K562 (cell line): ENCODE measurements at regions of chr3 and their contacts with region 1.

Region 1: DNA sequence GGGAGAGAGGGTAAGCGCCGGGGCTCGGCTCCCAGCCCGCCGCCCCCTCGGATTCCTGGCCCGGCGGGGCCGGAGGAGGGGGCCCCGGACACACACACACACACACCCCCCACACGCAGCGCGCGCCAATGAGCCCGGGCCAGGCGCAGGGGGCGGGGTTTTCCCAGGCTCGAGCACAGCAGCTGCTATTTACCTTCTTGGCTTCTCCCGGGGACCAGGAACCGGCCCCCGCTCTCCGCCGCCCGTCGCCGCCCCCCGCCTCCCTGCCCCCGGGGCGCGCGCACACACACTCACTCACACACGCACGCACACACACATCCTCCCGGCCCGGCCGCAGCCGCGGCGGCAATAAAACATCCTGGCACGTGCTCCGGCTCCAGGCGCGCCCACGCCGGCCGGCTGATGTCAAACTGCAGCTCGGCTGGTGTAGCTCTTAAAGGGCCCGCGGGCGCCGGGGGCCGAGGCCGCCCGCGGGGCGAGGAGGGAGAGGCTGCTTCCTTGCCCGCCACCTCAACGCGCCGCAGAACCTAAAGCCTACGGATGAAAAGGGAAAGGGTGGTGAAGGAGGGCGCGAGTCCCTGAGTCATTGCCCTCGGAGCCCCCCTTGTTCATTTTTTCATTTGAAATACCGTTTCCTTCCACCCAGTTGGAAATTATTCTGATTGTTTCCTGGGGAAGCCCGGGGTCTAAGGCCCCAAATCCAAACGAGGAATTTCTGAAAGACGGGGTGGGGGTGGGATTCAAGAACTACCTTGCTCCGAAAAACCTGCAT is 1.0 kb upstream of the HES1 start:
- DNase-seq: peak; percentile 75 to 94 (median 80)
- ATAC-seq: peak; percentile 61
- H3K4me3 ChIP-seq: peak overlapping the region; percentile 56
- H3K27ac ChIP-seq: peak overlapping the region; percentile 85
- H3K4me1 ChIP-seq: peaks cover 26 to 49% of the 10 kb centered on the region in 2 experiments
- H3K27me3 ChIP-seq: no peaks in the 10 kb centered on the region
- CTCF ChIP-seq: no peak
- EP300 ChIP-seq: peak; percentile 67
- POLR2A ChIP-seq: peak; percentile 69
- RAD21 ChIP-seq: peak in 1 of 2 experiments; percentile 21; a peak in 2 of 4 replicates

Region 2: GRCh38 chr3:193499119-193499770 is 635.7 kb before region 1 on chr3:
- CTCF ChIA-PET with region 1: no interaction called
- POLR2A ChIA-PET with region 1: no interaction called
- in situ Hi-C with region 1: no loop called
- intact Hi-C with region 1: no loop called
- DNase-seq: no peak
- ATAC-seq: no peak
- H3K4me3 ChIP-seq: no peak overlapping the region
- H3K27ac ChIP-seq: no peak overlapping the region
- H3K4me1 ChIP-seq: no peaks in the 10 kb centered on the region
- H3K27me3 ChIP-seq: no peaks in the 10 kb centered on the region; a peak in 1 of 5 replicates
- CTCF ChIP-seq: no peak
- EP300 ChIP-seq: no peak
- POLR2A ChIP-seq: no peak
- RAD21 ChIP-seq: no peak

Region 3: GRCh38 chr3:193742628-193743027 is 392.3 kb before region 1 on chr3:
- CTCF ChIA-PET with region 1: no interaction called
- POLR2A ChIA-PET with region 1: no interaction called
- in situ Hi-C with region 1: no loop called
- intact Hi-C with region 1: no loop called
- DNase-seq: no peak
- ATAC-seq: no peak
- H3K4me3 ChIP-seq: no peak overlapping the region
- H3K27ac ChIP-seq: no peak overlapping the region
- H3K4me1 ChIP-seq: peaks cover 6 to 18% of the 10 kb centered on the region in 2 experiments; a peak in 4 of 5 replicates
- H3K27me3 ChIP-seq: no peaks in the 10 kb centered on the region
- CTCF ChIP-seq: no peak
- EP300 ChIP-seq: no peak
- POLR2A ChIP-seq: no peak
- RAD21 ChIP-seq: no peak

Region 4: GRCh38 chr3:193788189-193788991 is 346.6 kb before region 1 on chr3:
- CTCF ChIA-PET with region 1: interaction called, 13 read pairs
- POLR2A ChIA-PET with region 1: interaction called, 21 read pairs
- in situ Hi-C with region 1: loop called (anchors 5 kb)
- intact Hi-C with region 1: loop called (anchors 2 kb)
- DNase-seq: peak; percentile 83 to 89 (median 85)
- ATAC-seq: peak; percentile 99
- H3K4me3 ChIP-seq: no peak overlapping the region
- H3K27ac ChIP-seq: no peak overlapping the region
- H3K4me1 ChIP-seq: peaks cover 10 to 13% of the 10 kb centered on the region in 2 experiments; a peak in 3 of 5 replicates
- H3K27me3 ChIP-seq: no peaks in the 10 kb centered on the region
- CTCF ChIP-seq: peak; percentile 86 to 95 (median 93)
- EP300 ChIP-seq: peak; percentile 59
- POLR2A ChIP-seq: no peak
- RAD21 ChIP-seq: peak; percentile 95 to 96

Region 5: DNA sequence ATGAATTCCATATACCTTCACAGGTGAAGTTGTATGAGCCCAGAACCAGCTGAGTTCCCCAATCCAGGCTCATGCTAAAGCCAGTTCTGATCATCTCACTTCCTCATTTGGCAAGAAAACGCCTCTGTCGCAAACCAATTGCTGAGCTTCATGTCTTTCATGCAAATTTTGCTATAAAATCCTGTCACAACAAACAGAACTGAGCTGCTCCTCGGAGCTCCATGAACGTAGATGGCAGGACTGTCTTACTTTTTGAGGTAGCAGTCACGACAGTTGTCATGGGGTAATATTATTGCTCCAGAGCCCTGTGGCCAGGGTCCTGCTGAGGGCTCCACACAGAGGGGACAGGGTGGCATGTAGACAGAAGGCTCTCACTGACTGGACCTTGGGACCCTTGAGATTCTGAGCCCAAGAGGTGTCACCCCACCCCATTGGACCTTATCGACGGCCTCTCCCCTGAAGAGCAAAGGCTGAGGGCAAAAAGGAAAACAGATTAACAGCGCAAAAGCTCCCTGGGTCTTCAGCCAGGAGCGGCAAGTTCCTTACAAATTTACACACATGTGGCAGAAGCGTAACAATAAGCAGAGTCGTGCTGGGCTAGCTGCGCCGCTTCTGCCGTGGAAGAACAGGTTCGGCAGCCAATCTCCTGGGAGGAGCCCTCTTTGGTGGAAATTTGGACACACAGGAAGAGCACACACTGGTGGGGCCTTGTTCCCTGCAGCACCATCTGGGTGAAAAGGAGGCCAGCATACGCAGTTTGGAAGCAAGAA is 292.7 kb before region 1 on chr3:
- CTCF ChIA-PET with region 1: no interaction called
- POLR2A ChIA-PET with region 1: interaction called, 14 read pairs
- in situ Hi-C with region 1: no loop called
- intact Hi-C with region 1: loop called (anchors 2 kb)
- DNase-seq: peak in 3 of 4 experiments; percentile 37 to 71 (median 42)
- ATAC-seq: peak; percentile 49
- H3K4me3 ChIP-seq: peak overlapping the region; percentile 22
- H3K27ac ChIP-seq: peak overlapping the region; percentile 95
- H3K4me1 ChIP-seq: peaks cover 23 to 60% of the 10 kb centered on the region in 2 experiments
- H3K27me3 ChIP-seq: no peaks in the 10 kb centered on the region
- CTCF ChIP-seq: peak in 1 of 3 experiments; percentile 7; a peak in 1 of 6 replicates
- EP300 ChIP-seq: no peak
- POLR2A ChIP-seq: peak; percentile 39
- RAD21 ChIP-seq: no peak; a peak in 1 of 4 replicates

Region 6: DNA sequence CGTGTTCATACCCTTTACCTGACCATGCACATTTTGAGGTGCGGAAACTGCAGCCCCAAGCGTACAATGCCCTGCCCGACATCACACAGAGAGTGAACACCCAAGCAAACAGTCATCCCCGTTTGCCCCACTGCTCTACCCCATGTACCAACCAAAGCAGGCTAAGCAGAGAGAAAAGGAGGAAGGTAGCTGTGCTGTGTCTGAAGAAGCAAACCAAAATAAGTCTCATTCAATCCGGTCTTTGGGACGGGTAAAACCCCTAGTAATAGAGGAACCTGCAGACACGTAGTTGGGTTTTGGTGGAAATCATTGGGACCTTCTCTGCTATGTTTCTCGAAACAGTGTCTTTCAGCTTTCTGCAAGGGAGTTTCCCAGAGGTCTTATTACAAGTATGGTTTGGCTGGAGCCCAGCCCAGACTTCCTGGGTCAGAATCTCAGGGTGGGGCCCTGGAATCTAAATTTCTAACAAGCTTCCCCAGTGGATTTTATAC is 163.6 kb before region 1 on chr3:
- CTCF ChIA-PET with region 1: interaction called, 3 read pairs
- POLR2A ChIA-PET with region 1: interaction called, 12 read pairs
- in situ Hi-C with region 1: no loop called
- intact Hi-C with region 1: loop called (anchors 10 kb)
- DNase-seq: no peak
- ATAC-seq: no peak
- H3K4me3 ChIP-seq: no peak overlapping the region
- H3K27ac ChIP-seq: no peak overlapping the region
- H3K4me1 ChIP-seq: peaks cover 6 to 19% of the 10 kb centered on the region in 2 experiments; a peak in 4 of 5 replicates
- H3K27me3 ChIP-seq: no peaks in the 10 kb centered on the region
- CTCF ChIP-seq: no peak
- EP300 ChIP-seq: no peak
- POLR2A ChIP-seq: no peak
- RAD21 ChIP-seq: no peak

Region 7: DNA sequence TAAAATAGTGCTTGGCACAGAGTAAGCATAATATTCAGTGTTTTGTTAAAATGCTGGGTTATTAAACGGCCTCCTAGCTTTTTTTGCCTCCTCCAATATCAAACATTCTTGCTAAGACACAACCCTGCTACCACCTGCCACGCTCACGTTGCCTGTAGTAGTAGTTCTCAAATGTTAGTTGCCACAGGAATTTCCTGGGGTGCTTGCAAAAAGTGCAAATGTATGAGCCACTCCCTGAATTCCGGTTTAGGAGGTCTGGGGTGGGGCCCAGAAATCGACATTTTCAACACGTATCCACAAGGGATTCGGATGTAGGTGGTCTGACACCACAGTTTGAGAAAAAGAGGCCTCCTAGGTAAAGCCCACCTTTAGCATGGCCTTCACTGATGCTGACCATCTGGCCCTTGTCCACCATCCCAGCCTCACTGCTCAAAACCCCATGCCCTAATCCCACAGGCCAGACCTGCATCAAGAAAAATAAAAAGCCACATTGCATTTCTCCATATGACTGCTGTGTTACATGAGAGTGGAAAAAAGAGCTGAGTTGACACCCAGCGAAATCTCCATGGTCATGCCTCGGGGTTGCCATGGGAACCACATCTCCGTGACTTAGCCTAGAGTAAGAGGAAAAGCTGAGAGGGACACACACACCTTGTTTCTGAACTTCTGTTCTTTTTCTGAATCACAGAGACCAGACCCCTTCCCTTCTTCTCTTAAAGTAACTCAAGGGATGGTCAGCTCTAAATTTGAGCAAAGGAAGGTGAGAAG is 115.4 kb before region 1 on chr3:
- CTCF ChIA-PET with region 1: no interaction called
- POLR2A ChIA-PET with region 1: no interaction called
- in situ Hi-C with region 1: no loop called
- intact Hi-C with region 1: no loop called
- DNase-seq: peak in 1 of 4 experiments; percentile 31
- ATAC-seq: peak; percentile 63; the same call in 1 of the 3 replicates
- H3K4me3 ChIP-seq: no peak overlapping the region
- H3K27ac ChIP-seq: no peak overlapping the region
- H3K4me1 ChIP-seq: no peaks in the 10 kb centered on the region
- H3K27me3 ChIP-seq: no peaks in the 10 kb centered on the region
- CTCF ChIP-seq: no peak
- EP300 ChIP-seq: no peak
- POLR2A ChIP-seq: no peak
- RAD21 ChIP-seq: no peak

Region 8: GRCh38 chr3:194255252-194256039 is 120.5 kb after region 1 on chr3:
- CTCF ChIA-PET with region 1: no interaction called
- POLR2A ChIA-PET with region 1: interaction called, 3 read pairs
- in situ Hi-C with region 1: no loop called
- intact Hi-C with region 1: loop called (anchors 1 kb)
- DNase-seq: peak; percentile 92 to 98 (median 94)
- ATAC-seq: peak; percentile 96
- H3K4me3 ChIP-seq: peak overlapping the region; percentile 26
- H3K27ac ChIP-seq: peak overlapping the region; percentile 98
- H3K4me1 ChIP-seq: peaks cover 42 to 48% of the 10 kb centered on the region in 2 experiments
- H3K27me3 ChIP-seq: no peaks in the 10 kb centered on the region; a peak in 1 of 5 replicates
- CTCF ChIP-seq: no peak
- EP300 ChIP-seq: peak; percentile 100
- POLR2A ChIP-seq: peak; percentile 88
- RAD21 ChIP-seq: peak in 1 of 2 experiments; percentile 34; a peak in 3 of 4 replicates